ENCODE measurements at regions of chr15 and their contacts with region 1.

Region 1: DNA sequence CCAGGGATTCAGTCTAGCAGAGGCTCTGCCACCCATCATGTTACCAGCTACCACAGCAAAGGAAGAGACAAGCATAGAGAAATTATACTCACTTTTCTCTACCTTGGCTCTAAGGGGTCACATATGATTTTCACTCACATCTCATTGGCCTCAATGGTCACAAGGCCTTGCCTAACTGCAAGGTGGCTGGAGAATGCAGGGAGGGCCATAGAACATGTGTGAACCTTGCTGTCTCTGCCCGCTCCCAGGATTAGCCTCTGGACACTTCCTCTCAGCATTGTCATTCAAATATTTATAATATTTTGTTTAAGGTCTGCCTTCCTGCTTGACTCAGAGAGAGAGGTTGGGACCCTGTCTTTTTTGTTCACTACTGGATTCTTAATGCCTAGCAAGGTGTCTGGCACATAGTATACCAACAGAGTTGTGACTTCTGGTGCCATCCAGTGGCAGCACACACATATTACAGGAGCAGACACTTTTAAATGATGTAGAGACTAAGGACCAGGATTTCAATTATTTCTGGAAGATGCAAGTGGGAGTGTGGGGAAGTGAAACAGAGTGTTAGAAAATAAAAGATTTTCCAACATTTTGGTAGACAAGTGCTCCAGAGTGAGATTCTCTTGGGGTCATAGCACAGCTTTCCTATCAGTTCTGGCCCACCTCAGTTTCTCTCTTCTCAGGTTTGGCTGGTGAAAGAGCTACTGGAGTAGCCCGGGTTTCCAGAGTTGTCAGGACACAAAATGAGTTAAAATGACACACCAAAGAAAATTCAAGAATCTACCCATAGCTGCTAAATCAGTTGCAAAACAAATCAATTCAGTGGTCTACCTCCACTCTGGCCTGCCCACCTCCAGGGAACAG is 119.0 kb upstream of the RASGRP1 start:
- DNase-seq: peak; percentile 19 to 87 (median 71)

Region 2: DNA sequence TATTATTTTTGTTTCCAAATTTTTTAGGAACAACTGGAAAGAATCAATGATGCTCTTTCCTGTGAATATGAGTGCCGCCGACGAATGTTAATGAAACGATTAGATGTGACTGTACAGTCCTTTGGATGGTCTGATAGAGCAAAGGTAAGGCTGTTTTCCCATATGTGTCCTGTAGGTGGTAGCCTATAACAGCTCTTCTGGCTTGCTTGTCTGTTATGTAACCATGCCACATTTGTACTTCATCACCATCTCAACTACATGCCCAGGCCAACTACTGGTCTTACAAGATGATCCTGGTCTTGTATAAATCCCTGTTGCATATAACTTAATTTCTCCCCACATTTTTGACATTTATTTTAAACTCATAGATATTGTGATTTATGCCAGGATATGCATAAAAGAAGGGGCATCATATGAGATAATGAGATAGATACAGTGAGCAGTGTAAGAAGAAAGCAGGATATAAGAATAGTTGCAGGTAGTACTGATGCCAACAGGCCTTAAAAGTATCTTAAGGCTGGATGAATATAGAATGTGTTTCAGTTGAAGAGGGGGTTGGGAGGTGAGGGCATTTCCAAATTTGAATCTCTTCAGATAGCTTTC is 209.4 kb before region 1 on chr15:
- intact Hi-C with region 1: loop called (anchors 5 kb)
- DNase-seq: peak in 25 of 42 donors; percentile 7 to 80 (median 45)

Region 3: GRCh38 chr15:38521316-38521715 is 162.3 kb before region 1 on chr15:
- intact Hi-C with region 1: no loop called
- DNase-seq: no peak

Region 4: GRCh38 chr15:38563723-38564519 is 119.7 kb before region 1 on chr15:
- intact Hi-C with region 1: loop called (anchors 5 kb)
- DNase-seq: peak; percentile 29 to 90 (median 81)

Region 5: GRCh38 chr15:38576837-38577236 is 106.8 kb before region 1 on chr15:
- intact Hi-C with region 1: no loop called
- DNase-seq: no peak